ENCODE measurements at regions of chr15 and their contacts with region 1.

Region 1: DNA sequence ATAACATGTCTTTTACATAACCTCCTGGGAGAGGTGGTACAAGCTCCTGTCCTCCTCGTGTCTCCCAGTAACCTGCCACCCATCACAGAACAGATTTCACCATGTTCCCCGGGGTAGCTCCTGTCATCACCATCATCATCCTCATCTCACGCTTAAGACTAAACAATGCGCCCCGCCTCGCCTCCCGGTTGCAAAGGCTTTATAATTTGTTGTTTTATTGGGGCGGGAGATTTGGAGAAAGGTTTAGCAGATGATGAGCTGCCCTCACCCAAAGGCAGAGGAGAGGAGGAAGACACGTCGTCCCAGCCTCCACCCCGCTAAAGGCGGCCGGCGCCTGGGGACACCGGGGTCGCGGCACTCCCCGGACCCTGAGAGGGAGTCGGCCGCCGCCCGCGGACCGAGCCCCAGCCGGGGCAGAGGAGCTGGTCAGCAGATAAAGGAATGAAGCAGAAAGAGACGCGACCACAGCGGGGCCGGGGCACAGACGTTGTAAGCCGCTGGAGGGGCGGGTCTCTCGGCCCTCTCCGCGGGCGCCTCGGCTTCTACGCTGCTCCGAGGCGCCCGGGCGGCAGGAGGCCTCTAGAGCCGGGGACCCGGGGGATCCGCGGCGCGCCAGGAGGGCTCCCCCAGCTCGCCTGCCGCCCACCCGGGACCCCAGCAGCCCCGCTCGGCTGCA is 589 bp downstream of the HERC1 start:
- DNase-seq: peak; percentile 52
- H3K4me3 ChIP-seq: peak overlapping the region; percentile 99
- H3K27ac ChIP-seq: peak overlapping the region; percentile 64
- H3K4me1 ChIP-seq: peaks cover 21% of the 10 kb centered on the region
- CTCF ChIP-seq: no peak

Region 2: DNA sequence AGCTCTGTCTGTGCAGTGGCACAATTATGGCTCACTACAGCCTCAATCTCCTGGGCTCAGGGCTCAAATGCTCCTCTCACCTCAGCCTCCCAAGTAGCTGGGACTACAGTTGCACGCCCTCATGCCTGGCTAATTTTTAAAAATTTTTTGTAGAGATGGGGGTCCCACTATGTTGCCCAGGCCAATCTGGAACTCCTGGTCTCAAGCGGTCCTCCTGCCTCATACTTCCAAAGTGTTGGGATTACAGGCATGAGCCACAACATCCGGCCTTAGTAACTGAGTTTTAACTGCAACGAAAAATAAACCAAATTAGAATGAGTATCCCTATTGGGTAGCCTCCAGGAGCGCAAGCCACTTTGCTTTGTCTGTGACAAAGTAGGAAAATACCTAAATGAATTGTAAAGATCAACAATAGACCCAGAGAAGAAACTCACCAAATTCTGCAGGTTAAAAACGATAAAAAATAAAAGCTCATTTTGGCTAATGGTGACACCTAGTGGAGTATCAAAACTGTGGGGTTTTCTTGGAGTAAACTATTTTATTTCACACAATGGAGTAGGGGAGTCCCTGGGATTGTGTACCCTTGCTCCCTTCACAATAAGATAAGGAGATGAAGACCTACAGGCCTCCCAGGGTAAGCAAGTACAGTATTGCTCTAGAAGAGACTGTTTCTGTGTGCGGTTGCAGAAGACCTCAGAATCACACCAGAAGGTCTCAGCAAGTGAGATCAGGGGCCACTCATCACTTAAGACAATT is 430.5 kb before region 1 on chr15:
- CTCF ChIA-PET with region 1: no interaction called
- POLR2A ChIA-PET with region 1: no interaction called
- intact Hi-C with region 1: no loop called
- DNase-seq: peak; percentile 50
- H3K4me3 ChIP-seq: no peak overlapping the region
- H3K27ac ChIP-seq: no peak overlapping the region
- H3K4me1 ChIP-seq: no peaks in the 10 kb centered on the region
- CTCF ChIP-seq: peak; percentile 84

Region 3: GRCh38 chr15:63891079-63891767 is 58.1 kb after region 1 on chr15:
- CTCF ChIA-PET with region 1: no interaction called
- POLR2A ChIA-PET with region 1: interaction called, 3 read pairs
- intact Hi-C with region 1: loop called (anchors 2 kb)
- DNase-seq: peak; percentile 75
- H3K4me3 ChIP-seq: no peak overlapping the region
- H3K27ac ChIP-seq: no peak overlapping the region
- H3K4me1 ChIP-seq: peaks cover 20% of the 10 kb centered on the region
- CTCF ChIP-seq: peak; percentile 99

Region 4: DNA sequence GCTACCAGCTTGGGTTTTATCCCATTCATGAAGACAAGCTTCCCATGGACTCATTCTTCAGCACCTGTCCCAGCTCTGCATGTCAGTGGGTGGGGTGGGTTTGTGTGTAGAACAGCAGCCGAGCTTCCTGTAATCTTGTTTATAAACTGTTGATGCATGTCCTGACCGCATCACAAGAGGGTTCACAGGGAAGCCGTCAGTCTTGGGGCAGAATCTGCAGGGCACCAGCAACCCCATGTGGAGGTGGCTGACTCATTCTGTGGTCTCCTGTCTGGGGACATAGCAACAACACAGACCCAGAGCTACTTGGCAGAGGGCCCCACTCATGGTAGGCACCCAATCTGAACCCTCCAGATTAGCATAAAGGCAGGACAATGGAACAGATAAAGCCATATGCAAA is 177.6 kb after region 1 on chr15:
- CTCF ChIA-PET with region 1: no interaction called
- POLR2A ChIA-PET with region 1: no interaction called
- intact Hi-C with region 1: loop called (anchors 5 kb)
- DNase-seq: peak; percentile 94
- H3K4me3 ChIP-seq: peak overlapping the region; percentile 30
- H3K27ac ChIP-seq: peak overlapping the region; percentile 13
- H3K4me1 ChIP-seq: peaks cover 34% of the 10 kb centered on the region
- CTCF ChIP-seq: peak; percentile 70

Region 5: DNA sequence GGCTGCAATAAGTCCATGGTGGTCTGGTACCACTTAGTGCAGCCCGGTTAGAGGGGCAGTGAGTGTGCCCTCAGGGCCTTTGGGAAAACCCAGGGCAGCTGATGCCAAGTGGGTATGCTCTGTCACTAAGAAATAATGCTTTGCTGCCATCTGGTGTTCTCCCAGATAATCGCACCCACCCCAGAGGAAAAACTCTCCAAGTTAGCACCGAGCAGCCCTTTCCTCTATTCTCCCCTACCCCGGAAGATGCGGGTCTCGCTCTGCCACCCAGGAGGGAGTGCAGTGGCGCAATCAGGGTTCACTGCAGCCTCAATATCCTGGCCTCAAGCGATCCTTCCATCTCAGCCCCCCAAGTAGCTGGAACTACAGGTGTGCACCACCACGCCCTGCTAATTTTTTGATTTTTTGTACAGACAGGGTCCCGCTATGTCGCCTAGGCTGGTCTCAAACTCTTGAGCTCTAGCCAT is 234.4 kb after region 1 on chr15:
- CTCF ChIA-PET with region 1: no interaction called
- POLR2A ChIA-PET with region 1: no interaction called
- intact Hi-C with region 1: loop called (anchors 5 kb)
- DNase-seq: peak; percentile 81
- H3K4me3 ChIP-seq: peak overlapping the region; percentile 9
- H3K27ac ChIP-seq: no peak overlapping the region
- H3K4me1 ChIP-seq: peaks cover 17% of the 10 kb centered on the region
- CTCF ChIP-seq: peak; percentile 87

Region 6: DNA sequence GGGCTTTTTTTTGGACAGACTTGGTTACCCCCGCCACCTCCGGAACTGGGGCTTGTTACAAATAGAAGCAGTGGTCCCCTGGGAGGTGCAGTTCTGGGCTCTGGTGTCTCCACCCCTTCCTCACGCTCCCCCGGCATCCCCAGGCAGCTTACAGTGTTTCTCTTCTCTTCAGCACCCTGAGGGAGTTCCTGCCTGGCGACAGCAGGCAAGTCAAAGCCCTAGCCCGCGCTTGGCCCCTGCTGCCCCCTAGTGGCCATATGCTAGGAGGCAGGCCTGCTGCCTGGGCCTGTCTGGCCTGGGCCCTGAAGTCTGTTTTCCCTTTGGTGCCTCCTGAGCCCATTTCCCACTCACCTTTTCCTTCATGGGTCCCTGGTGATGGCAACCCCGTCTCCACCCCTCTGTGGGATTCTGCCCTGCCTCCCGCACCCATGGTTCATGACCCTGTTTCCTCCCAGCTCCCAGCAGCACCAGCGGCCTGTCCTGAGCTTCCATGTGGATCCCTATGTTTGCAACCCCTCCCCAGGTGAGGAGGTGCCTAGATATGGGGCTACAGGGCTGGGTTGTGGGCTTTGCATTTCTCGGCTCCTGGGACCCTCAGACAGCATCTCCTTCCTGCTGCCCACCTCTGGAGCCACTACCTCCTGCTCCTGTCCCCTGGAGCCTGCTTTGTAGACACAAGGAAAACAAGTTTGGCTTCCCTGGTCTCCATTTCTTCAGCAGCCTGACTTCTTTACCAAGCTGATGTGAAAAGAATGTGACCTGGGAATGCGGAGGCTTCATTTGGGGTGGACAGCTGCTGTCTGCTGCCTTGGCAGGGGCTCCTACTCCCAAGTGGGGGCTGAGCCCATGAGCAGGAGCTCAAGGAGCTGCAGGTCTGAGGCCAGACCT is 320.6 kb after region 1 on chr15:
- CTCF ChIA-PET with region 1: no interaction called
- POLR2A ChIA-PET with region 1: no interaction called
- intact Hi-C with region 1: loop called (anchors 5 kb)
- DNase-seq: peak; percentile 98
- H3K4me3 ChIP-seq: peak overlapping the region; percentile 90
- H3K27ac ChIP-seq: peak overlapping the region; percentile 93
- H3K4me1 ChIP-seq: peaks cover 46% of the 10 kb centered on the region
- CTCF ChIP-seq: peak; percentile 97

Measured in OCI-LY7 (cell line).